Caco-2 (cell line): ENCODE measurements at regions of chr9 and their contacts with region 1.

Region 1: GRCh38 chr9:97803167-97804058 is 49.6 kb upstream of the FOXE1 start:
- DNase-seq: peak; percentile 88 to 91
- H3K4me3 ChIP-seq: peak overlapping the region; percentile 66
- H3K4me3 Mint-ChIP-seq: peak overlapping the region; percentile 82
- H3K27ac Mint-ChIP-seq: peak overlapping the region; percentile 92
- H3K4me1 ChIP-seq: peaks cover 42% of the 10 kb centered on the region
- H3K4me1 Mint-ChIP-seq: peaks cover 39% of the 10 kb centered on the region
- H3K27me3 ChIP-seq: no peaks in the 10 kb centered on the region
- H3K27me3 Mint-ChIP-seq: no peaks in the 10 kb centered on the region
- CTCF ChIP-seq: peak; percentile 29 to 36

Region 2: DNA sequence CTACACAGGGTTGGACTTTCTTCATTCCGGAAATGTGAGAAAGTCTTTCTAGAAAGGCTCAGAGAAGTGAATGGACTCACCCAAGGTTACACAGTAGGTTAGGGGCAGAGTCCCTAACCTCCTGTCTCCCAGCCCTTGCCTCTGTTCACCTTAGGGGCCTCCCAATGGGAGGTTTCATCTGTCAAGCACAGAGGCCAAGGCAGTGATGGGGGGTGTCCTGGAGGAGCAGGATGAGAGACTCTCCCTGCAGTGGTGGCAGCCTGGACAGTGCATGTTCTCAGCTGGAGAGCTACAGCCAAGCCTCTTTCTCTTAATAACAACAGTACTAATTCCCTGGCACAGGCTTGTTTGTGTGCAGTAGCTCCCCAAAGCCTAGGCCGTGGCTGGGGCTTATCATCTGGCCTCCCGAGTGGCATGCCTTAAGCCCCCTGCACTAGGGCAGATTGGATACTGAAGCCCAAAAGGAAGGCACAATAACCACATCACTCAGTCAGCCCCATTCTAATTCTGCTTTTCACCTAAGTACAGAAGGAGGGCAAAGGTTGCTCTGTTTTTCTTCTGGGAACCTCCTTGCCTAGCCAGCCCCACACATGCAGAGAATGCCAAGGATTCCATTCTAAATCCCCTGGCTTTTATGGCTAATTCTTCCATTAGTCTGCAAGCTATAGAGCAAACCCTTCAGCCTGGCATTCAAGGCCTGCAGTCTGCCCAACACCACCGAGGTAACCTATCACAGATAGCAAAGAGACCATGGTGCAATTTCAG is 56.0 kb before region 1 on chr9:
- CTCF ChIA-PET with region 1: no interaction called
- POLR2A ChIA-PET with region 1: interaction called, 3 read pairs
- intact Hi-C with region 1: loop called (anchors 1 kb)
- DNase-seq: peak; percentile 84 to 88
- H3K4me3 ChIP-seq: no peak overlapping the region
- H3K4me3 Mint-ChIP-seq: peak overlapping the region; percentile 71
- H3K27ac Mint-ChIP-seq: peak overlapping the region; percentile 85
- H3K4me1 ChIP-seq: peaks cover 81% of the 10 kb centered on the region
- H3K4me1 Mint-ChIP-seq: peaks cover 65% of the 10 kb centered on the region
- H3K27me3 ChIP-seq: no peaks in the 10 kb centered on the region
- H3K27me3 Mint-ChIP-seq: no peaks in the 10 kb centered on the region
- CTCF ChIP-seq: no peak

Region 3: GRCh38 chr9:97900738-97901565 is 97.5 kb after region 1 on chr9:
- CTCF ChIA-PET with region 1: no interaction called
- POLR2A ChIA-PET with region 1: no interaction called
- intact Hi-C with region 1: loop called (anchors 5 kb)
- DNase-seq: peak in 1 of 2 experiments; percentile 61
- H3K4me3 ChIP-seq: no peak overlapping the region
- H3K4me3 Mint-ChIP-seq: no peak overlapping the region
- H3K27ac Mint-ChIP-seq: no peak overlapping the region
- H3K4me1 ChIP-seq: no peaks in the 10 kb centered on the region
- H3K4me1 Mint-ChIP-seq: no peaks in the 10 kb centered on the region
- H3K27me3 ChIP-seq: no peaks in the 10 kb centered on the region
- H3K27me3 Mint-ChIP-seq: no peaks in the 10 kb centered on the region
- CTCF ChIP-seq: peak; percentile 71 to 73